Left ventricle myocardium superior (tissue), 1 donor: ENCODE measurements at regions of chr10 and their contacts with region 1.

Region 1: DNA sequence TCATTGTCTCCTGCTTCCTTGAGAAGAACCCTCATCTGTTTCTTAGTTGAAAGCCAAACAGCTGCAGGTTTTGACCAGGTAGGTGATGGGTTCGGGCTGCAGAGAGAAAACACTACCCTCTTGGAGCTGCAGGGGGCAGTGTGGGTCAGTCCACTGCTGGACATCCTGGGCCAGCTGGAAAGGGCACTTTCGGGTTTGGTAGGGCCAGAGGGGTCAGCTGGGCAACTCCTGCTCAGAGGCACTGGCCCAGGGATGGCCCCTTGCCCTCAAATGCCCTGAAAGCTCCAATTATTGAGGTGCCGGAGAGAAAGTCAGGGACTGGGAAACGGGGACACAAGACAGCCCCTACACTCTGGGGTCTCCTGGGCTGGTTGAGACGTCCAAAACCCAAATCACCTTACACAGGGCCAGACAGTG is 90.7 kb downstream of the MKI67 start:
- DNase-seq: peak; percentile 66
- ATAC-seq: peak; percentile 79

Region 2: DNA sequence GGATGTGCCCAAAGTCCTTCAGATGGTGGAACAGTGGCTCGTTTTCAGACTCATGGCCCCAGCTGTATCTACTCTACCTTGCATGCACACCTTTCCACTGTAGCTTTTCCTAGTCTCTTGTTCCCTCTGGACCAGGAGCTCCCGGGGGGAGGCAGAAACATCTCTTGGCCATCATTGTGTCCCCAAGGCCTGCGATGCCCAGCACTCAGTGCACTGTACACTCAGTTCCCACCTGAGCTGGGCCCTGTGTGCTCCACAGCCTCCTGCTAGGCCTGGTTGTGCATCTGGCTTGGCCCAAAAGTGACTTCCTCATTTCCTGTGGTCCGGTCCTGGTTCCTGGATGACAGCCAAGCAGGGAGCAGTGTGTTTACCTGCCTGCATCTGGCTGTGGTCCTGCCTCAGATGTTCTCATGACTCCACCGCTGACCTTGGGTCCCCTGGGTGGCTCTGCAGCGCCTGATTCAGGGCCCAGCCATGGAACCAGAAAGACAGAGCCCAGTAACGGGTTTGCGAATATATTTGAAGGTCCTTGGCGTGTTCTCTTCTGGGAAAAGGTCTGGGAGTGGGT is 1140.3 kb before region 1 on chr10:
- intact Hi-C with region 1: no loop called
- DNase-seq: no peak
- ATAC-seq: no peak

Region 3: GRCh38 chr10:127922675-127923366 is 112.7 kb before region 1 on chr10:
- intact Hi-C with region 1: no loop called
- DNase-seq: peak; percentile 92
- ATAC-seq: peak; percentile 91

Region 4: GRCh38 chr10:128069351-128070051 is 33.9 kb after region 1 on chr10:
- intact Hi-C with region 1: loop called (anchors 5 kb)
- DNase-seq: peak; percentile 67
- ATAC-seq: peak; percentile 66

Region 5: DNA sequence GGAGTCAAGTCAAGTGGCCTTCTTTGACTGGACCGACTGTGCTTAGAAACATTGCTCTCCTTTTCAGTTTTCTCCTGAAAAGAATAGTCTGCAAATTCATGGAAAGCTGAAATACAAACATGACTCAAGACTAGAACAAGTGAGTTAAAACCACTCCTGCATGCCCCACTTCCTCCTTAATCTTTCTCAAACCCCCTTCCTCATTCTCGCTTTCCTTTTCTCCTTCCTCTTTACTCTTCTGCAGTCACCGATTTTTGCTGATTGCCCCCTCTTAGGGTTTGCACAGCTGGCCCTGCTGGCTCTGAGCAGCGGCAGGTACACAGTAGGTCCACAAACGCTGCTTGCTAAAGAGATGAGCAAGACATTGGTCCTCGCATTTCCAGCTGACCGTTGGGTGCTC is 125.5 kb after region 1 on chr10:
- intact Hi-C with region 1: no loop called
- DNase-seq: no peak
- ATAC-seq: no peak